ENCODE measurements at regions of chr5 and their contacts with region 1.

Region 1: GRCh38 chr5:132473019-132473531 is 17.5 kb downstream of the IRF1 start:
- DNase-seq: peak; percentile 74
- CTCF ChIP-seq: peak; percentile 9

Region 2: DNA sequence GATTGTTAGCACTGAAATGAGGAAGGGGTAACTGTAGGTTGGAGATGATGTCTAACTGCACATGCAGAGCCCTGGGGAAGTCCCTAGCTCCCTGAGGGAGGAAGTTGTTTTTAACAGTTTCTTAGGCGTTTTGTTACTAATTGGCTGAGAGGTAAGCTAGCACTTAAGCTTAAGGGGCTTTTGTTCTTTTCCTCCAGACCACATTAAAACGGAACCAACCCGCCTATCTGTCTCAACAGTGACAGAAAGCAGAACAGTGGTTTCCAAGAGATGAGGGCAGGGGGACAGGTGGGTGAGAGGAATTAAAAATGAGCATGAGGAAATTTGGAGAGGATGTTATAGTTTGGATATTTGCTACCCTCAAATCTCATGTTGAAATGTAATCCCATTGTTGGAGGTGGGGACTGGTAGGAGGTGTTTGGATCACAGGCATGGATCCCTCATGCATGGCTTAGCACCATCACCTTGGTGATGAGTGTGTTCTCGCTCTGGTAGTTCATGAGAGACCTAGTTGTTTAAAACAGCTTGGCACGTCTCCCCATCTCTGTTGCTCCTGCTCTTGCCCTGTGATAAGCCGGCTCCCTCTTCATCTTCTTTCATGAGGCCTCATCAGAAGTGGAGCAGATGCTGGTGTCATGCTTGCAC is 1263.4 kb before region 1 on chr5:
- in situ Hi-C with region 1: no loop called
- DNase-seq: peak; percentile 64
- CTCF ChIP-seq: no peak

Region 3: DNA sequence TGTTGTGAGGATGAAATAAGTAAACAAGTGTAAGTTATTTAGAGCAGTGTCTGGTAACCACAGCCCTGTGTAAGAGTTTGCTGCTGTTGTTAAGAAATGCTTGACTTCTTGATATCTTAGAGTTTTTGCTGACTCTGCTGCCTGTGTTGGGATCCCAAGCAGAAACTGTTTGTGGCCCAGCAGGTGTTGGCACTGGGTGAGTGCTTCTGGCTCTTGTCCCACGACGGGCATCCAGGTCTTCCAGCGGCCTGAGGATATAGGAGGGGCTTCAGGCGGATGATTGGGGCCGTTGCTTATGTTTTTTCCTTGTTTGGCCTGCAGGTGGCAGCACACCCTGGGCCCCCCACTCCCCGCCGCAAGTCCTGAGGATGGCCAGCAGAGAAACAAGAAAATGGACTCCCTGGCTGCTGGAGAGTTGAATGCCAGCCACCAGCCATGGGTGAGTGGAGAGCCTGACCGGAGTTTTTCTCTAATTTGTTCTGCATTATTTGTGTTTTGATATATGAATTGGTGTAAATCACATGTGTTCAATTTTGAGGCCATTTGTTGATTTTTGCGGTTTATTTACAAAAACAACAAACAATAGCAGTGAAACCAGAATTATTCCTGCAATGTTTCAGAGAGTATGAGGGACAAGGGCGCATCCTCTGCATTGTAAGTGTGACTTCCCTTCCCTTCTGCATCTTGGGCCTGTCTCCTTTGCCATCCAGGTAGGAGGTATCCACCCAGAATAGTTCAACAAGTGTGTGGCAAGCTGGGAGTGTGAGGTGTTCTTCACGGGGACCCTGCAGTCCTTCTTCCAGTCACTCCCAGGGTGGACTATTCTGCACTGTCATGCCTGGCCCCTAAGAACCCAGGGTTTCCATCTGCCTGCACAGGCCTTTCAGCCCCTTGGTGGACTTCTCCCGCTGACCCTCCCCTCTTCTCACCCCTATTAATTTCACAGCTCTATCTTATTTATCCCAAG is 53.3 kb before region 1 on chr5:
- in situ Hi-C with region 1: loop called (anchors 10 kb)
- DNase-seq: peak; percentile 60
- CTCF ChIP-seq: peak; percentile 79